Mammary epithelial cell (primary cell): ENCODE measurements at regions of chrX and their contacts with region 1.

Region 1: DNA sequence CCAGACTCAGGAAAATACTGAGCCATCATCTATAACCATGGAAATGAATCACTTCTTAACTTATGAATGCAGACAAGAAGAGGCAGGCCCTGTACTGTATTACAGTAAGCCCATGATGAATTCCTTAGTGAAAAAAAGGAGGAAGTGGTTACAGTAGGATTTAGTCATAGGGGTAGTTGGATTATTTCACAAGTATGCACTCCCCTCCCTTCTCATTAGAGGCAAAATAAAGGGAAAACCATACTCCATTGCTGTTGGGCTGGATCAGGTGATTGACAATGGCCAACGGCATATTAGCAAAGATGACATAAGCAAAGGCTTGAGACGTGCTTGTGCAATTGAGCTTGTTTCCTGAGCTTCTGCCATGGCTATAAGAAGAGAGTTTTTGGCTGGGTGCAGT is 181.1 kb upstream of the PRPS2 start:
- DNase-seq: peak; percentile 98
- H3K4me3 ChIP-seq: no peak overlapping the region
- H3K27ac ChIP-seq: peak overlapping the region; percentile 86
- H3K4me1 ChIP-seq: peaks cover 28% of the 10 kb centered on the region
- H3K27me3 ChIP-seq: no peaks in the 10 kb centered on the region
- CTCF ChIP-seq: no peak

Region 2: GRCh38 chrX:12548746-12549145 is 61.3 kb before region 1 on chrX:
- CTCF ChIA-PET with region 1: no interaction called
- dilution Hi-C with region 1: no loop called
- in situ Hi-C with region 1: no loop called
- intact Hi-C with region 1: no loop called
- DNase-seq: peak; percentile 41
- H3K4me3 ChIP-seq: no peak overlapping the region
- H3K27ac ChIP-seq: no peak overlapping the region
- H3K4me1 ChIP-seq: no peaks in the 10 kb centered on the region
- H3K27me3 ChIP-seq: no peaks in the 10 kb centered on the region
- CTCF ChIP-seq: no peak

Region 3: DNA sequence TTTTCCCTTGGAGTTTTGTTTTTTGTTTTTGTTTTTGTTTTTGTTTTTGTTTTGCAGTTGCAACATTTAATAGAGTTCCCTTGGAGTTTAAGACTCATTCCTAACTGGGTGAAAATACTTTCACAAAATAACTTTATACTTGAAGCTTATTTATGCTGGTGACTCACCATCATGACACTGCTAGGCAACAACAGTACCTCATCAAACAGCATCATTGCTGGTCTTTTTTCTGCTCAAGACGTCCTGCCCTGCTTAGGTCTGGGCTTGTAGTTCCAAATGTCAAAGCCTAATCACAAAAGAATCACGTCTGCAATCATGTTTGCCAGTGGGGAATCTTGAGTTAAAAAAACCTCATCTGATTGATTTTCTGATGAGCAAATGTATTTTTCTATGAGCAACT is 75.5 kb after region 1 on chrX:
- CTCF ChIA-PET with region 1: no interaction called
- dilution Hi-C with region 1: no loop called
- in situ Hi-C with region 1: no loop called
- intact Hi-C with region 1: loop called (anchors 5 kb)
- DNase-seq: peak; percentile 63
- H3K4me3 ChIP-seq: no peak overlapping the region
- H3K27ac ChIP-seq: no peak overlapping the region
- H3K4me1 ChIP-seq: no peaks in the 10 kb centered on the region
- H3K27me3 ChIP-seq: no peaks in the 10 kb centered on the region
- CTCF ChIP-seq: no peak